ENCODE measurements at regions of chr15 and their contacts with region 1.

Region 1: DNA sequence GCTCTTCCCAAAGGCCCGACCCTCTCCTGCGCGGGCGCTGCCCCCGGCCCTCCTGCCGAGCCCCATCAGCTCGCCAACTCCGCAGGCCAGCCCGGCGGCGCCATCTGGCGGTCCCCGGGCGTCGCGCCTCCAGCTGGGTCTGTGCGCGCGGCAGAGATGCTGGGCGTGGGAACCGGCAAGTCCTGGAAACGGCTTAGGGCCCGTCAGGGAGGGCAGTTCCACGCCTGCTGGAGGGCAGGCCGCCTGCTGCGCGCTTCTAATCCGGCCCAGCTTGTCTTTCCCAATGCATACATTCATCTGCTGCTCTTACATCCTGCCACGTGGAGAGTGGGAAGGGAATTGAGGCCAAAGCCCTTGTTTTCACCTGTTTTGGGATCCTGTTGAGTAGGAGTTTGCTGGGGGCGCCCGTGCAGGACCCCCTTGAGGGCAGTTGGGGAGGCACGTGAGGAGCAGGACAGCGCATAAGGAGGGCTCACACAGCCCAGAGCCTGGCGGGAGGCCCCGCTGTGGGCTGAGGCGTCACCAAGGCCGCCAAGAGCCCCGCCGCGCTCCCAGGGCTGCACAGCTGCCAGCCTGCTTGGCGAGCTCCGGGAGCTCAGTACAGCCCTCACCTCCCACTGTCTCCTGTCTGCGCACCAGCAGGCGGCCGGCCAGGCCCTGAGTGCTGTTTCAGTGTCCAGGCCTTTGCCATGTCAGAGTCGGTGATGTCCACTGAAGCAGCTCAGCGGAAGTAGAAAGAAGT is 165.6 kb downstream of the NSMCE3 start:
- DNase-seq: peak; percentile 49
- H3K4me3 ChIP-seq: peak overlapping the region; percentile 43
- H3K27ac ChIP-seq: no peak overlapping the region
- H3K27me3 ChIP-seq: no peaks in the 10 kb centered on the region
- CTCF ChIP-seq: peak; percentile 86

Region 2: GRCh38 chr15:29071232-29071881 is 32.6 kb before region 1 on chr15:
- CTCF ChIA-PET with region 1: interaction called, 11 read pairs
- POLR2A ChIA-PET with region 1: no interaction called
- DNase-seq: no peak
- H3K4me3 ChIP-seq: no peak overlapping the region
- H3K27ac ChIP-seq: no peak overlapping the region
- H3K27me3 ChIP-seq: no peaks in the 10 kb centered on the region
- CTCF ChIP-seq: no peak

Region 3: DNA sequence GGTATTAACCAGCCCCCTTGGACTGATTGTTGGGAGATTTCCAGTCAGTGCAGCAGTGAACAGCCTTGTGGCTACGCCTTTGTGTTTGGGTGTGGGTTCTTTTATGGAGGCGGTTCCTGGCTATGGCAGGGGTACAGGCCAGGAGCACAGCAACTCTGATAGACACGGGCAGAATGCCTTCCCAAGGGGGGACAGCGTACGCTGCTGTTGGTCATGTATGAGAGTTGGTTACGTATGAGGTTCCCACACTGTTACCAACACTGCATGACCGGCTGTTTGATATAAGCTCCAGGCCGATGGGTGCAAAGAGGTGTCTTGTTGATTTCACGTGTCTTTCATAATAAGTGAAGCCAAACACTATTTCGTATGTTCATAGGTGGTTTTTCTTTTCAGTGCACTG is 22.2 kb before region 1 on chr15:
- CTCF ChIA-PET with region 1: interaction called, 19 read pairs
- POLR2A ChIA-PET with region 1: no interaction called
- DNase-seq: no peak
- H3K4me3 ChIP-seq: no peak overlapping the region
- H3K27ac ChIP-seq: no peak overlapping the region
- H3K27me3 ChIP-seq: no peaks in the 10 kb centered on the region
- CTCF ChIP-seq: no peak

Region 4: GRCh38 chr15:29090617-29091466 is 13.2 kb before region 1 on chr15:
- CTCF ChIA-PET with region 1: interaction called, 62 read pairs
- POLR2A ChIA-PET with region 1: no interaction called
- DNase-seq: no peak
- H3K4me3 ChIP-seq: no peak overlapping the region
- H3K27ac ChIP-seq: no peak overlapping the region
- H3K27me3 ChIP-seq: no peaks in the 10 kb centered on the region
- CTCF ChIP-seq: peak; percentile 86

Region 5: DNA sequence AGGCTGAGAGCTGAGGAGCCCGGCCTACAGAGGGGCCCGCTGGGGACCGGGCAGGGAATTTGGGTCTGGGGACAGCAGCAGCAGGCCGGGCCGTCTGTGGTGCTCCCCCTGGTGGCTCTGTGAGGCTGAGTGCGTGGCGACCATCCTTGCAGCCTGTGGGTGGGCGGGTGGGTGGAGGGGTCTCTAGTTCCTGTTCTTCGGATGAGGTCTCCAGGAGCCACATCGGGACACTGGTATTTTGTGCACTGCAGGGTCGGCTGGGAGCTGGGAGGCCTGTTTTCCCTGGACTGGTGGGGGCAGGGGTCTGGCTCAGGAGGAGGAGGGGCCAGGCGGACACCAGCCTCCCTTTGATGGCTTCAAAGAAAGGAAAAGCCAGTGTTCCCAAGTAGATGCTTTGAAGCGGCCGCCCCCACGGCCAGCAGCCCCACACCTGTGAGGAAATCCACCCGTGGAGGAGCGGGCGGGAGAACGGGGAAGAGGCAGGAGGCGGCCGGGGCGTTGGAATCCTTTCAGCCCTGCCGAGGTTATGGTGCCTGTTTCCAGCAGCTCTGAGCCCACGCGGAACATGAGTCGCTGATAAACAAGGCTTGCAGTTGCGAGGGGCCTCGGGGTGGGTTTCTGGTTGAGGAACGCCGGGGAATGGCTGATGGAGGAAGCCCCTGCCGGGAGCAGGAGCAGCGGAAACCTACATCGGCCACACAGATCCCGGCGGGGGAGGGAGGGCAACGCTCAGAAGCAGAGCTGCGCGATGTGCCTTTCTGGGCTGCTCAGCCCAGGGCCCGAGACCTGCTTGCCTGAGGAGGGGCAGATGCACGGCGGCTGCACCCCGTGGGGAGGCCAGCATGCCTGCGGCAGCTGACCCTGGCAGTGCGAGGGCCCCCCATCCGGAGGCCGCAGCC is 11.3 kb after region 1 on chr15:
- CTCF ChIA-PET with region 1: interaction called, 26 read pairs
- POLR2A ChIA-PET with region 1: no interaction called
- DNase-seq: no peak
- H3K4me3 ChIP-seq: peak overlapping the region; percentile 40
- H3K27ac ChIP-seq: no peak overlapping the region
- H3K27me3 ChIP-seq: no peaks in the 10 kb centered on the region
- CTCF ChIP-seq: peak; percentile 45; the same call in 1 of the 2 replicates